ENCODE measurements at regions of chr3 and their contacts with region 1.

Region 1: DNA sequence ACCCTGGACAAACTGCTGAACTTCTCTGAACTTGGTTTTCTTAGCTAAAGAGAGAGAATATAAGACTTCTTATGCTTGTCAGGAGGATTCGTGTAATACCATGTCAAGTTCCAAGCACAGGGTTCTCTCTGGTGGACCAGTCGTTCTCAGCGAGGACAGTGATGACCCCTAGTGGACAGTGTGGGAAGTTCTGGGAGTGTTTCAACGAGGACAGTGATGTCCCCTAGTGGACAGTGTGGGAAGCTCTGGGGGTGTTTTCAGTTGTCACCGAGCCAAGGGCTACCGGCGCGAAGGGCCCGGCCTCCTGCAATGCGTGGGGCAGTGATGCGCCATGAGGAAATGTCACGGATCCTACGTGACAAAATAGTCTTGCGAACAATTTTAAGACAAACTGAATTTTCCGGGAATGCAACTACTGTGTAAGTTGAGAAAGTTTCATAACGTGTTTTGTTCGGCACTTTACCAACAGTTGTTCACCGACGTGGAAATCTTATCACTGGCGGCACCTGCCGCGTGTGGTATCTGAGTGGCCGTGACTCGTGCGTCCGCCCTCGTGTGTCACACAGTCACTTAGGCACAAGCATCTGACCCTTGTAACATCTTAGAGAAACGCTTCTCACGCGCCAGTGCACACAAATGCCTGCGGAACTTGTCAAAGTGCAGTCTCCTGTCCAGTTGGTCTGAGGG is 39.3 kb upstream of the MUC4 start:
- DNase-seq: peak; percentile 94
- H3K4me3 Mint-ChIP-seq: no peak overlapping the region
- H3K27ac Mint-ChIP-seq: no peak overlapping the region
- H3K4me1 Mint-ChIP-seq: peaks cover 15% of the 10 kb centered on the region
- H3K27me3 Mint-ChIP-seq: peaks cover 3% of the 10 kb centered on the region

Region 2: GRCh38 chr3:195271116-195271858 is 579.7 kb before region 1 on chr3 and contains the start of gene XXYLT1:
- CTCF ChIA-PET with region 1: interaction called, 23 read pairs
- POLR2A ChIA-PET with region 1: no interaction called
- DNase-seq: peak; percentile 90
- H3K4me3 Mint-ChIP-seq: peak within 1 kb of the TSS; percentile 87
- H3K27ac Mint-ChIP-seq: peak within 1 kb of the TSS; percentile 92
- H3K4me1 Mint-ChIP-seq: peaks cover 22% of the 10 kb centered on the region
- H3K27me3 Mint-ChIP-seq: no peaks in the 10 kb centered on the region
- total RNA-seq, gene XXYLT1: 7.7 to 7.8 TPM

Region 3: DNA sequence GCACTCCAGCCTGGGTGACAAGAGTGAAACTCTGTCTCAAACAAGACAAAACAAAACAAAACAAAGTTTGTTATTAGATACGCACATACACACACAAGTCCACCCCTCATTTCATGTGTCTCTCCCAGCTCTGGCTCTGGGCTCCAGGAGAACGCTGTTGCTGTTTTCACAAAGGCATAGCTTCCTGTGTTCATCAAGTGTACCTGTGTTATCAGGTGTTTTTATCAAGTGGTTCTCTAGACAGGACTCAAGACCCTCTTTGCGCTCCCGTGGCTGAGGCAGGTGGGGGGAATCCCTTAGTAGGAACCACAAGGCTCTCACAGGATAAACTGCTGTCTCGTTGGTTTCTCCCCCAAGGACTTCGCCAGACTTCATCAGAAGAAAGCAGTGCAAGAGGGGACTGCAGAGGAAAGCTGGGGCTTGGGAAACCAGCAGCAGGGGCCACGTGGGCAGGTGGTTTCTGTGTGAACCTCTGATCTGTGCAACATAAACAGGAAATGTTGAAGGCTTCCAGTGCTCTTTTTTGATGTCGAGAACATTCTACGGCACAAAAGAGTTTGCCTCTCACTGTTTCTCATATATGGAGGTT is 301.0 kb before region 1 on chr3:
- CTCF ChIA-PET with region 1: interaction called, 14 read pairs
- POLR2A ChIA-PET with region 1: no interaction called
- DNase-seq: peak; percentile 89
- H3K4me3 Mint-ChIP-seq: peak overlapping the region; percentile 69
- H3K27ac Mint-ChIP-seq: peak overlapping the region; percentile 92
- H3K4me1 Mint-ChIP-seq: peaks cover 86% of the 10 kb centered on the region
- H3K27me3 Mint-ChIP-seq: no peaks in the 10 kb centered on the region

Region 4: DNA sequence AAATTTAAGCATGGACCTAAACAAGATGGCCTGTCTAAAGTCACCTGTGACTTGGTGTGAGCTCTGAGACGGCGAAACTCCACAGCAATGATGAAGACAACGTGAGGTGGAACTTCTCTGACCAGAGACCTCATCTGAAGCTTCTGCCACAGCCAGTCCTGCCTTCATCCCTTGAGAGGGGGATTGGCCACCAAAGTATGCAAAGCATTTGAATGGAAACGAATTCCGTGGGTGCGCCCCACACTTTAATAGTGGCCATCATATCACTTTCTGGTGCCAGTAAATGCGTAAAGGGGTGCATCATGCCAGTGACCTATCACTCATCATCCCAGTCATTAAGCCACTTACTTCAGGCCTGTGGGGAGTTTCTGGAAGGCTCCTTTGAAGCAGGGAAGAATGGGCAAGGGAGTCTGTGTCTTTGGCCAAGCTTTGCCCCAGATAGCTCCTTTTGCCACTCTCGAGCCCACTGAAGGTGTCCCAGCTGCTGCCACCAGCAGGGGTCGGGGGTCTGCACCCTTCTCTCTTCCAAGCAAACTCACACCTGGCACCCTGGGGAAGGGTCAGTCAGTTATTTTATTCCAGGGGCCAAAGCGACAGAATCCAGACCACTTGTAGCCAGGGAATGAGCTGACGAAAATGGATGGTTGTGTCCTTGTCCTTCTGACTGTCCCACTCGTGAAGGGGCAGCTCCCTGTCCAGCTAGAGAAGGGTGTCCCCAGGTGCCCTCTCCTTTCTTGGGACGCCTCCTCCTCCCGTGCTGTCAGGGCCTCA is 112.5 kb before region 1 on chr3:
- CTCF ChIA-PET with region 1: interaction called, 10 read pairs
- POLR2A ChIA-PET with region 1: no interaction called
- DNase-seq: no peak
- H3K4me3 Mint-ChIP-seq: no peak overlapping the region
- H3K27ac Mint-ChIP-seq: no peak overlapping the region
- H3K4me1 Mint-ChIP-seq: no peaks in the 10 kb centered on the region
- H3K27me3 Mint-ChIP-seq: peaks cover 2% of the 10 kb centered on the region

Region 5: DNA sequence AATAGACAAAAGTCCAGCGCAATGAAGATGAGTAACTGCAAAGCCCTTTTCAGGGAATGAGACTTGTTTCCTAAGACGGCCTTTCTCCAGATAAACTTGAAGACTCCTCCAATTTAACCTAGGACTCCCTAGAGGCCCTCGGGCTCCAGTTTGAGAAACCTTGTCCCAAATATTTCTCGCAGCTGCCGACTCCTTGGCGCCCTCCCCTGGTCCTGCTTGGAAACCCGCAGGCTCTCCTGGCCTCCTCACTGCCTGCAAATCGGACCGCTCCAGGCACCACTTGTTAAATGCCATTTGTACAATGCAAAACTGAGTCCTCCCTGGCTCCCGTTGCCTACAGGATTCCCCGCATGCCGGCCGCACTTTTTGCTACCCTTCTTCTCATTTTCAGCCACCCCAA is 76.1 kb before region 1 on chr3:
- CTCF ChIA-PET with region 1: no interaction called
- POLR2A ChIA-PET with region 1: no interaction called
- DNase-seq: no peak
- H3K4me3 Mint-ChIP-seq: no peak overlapping the region
- H3K27ac Mint-ChIP-seq: no peak overlapping the region
- H3K4me1 Mint-ChIP-seq: peaks cover 13% of the 10 kb centered on the region
- H3K27me3 Mint-ChIP-seq: no peaks in the 10 kb centered on the region

Region 6: GRCh38 chr3:195894780-195895607 is 44.0 kb after region 1 on chr3:
- CTCF ChIA-PET with region 1: interaction called, 11 read pairs
- POLR2A ChIA-PET with region 1: interaction called, 3 read pairs
- DNase-seq: peak; percentile 71
- H3K4me3 Mint-ChIP-seq: peak overlapping the region; percentile 87
- H3K27ac Mint-ChIP-seq: peak overlapping the region; percentile 87
- H3K4me1 Mint-ChIP-seq: peaks cover 44% of the 10 kb centered on the region
- H3K27me3 Mint-ChIP-seq: no peaks in the 10 kb centered on the region